Natural killer cell (primary cell): ENCODE measurements at regions of chr17 and their contacts with region 1.

Region 1: DNA sequence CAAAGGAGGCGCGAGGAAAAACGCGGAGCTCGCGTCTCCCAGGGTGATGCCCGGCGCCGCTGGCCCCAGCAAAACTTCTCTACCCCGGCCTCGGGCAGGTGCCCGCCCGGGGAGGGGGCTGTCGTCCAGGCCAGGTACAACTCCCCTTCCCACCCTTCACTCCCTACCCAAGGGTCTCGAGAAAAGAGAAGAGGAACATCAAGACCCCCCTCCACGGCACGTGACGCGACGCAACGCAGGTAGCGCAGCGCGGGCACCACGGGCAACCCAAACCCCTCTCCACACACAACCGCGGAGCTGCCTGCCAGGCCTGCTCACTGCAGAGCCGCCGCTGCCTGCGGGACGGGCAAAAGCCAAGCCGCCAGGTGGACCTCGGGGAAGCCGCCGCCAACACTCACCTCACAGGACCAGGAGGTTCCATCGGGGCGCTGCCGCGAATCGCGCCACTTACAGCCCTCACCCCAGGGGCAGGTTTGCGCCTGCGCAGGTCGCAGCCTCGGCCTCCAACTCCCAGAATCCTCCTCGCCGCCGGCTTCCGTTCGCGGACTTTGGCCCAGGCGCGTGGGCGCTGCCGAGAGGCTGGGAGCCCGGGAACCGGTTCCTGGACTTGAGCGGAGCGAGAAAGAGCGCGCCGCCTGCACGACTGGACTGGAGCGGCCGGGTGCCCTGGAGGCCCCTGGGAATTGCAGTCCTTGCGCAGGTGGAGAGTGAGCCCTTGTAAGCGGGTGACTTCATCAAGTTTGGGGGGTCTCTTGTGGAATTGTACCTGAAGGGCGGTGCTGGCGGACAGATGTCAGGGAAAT is at the start of gene ZNF232:
- DNase-seq: peak; percentile 82 to 95
- ATAC-seq: peak; percentile 93 to 94 (median 93)
- H3K4me3 ChIP-seq: peak within 1 kb of the TSS; percentile 96
- H3K4me3 Mint-ChIP-seq: peak within 1 kb of the TSS; percentile 86
- H3K27ac ChIP-seq: peak within 1 kb of the TSS; percentile 56
- H3K27ac Mint-ChIP-seq: peak within 1 kb of the TSS; percentile 73 to 84
- H3K4me1 ChIP-seq: peaks cover 18% of the 10 kb centered on the region
- H3K4me1 Mint-ChIP-seq: peaks cover 19% of the 10 kb centered on the region in 2 donors
- H3K27me3 ChIP-seq: peaks cover 10% of the 10 kb centered on the region
- H3K27me3 Mint-ChIP-seq: peaks cover 4 to 18% of the 10 kb centered on the region in 2 donors
- CTCF ChIP-seq: no peak
- total RNA-seq, gene ZNF232: 2.8 to 6.5 (median 5.6) TPM

Region 2: GRCh38 chr17:5097101-5097834 is 14.3 kb before region 1 on chr17:
- intact Hi-C with region 1: loop called (anchors 1 kb)
- DNase-seq: peak; percentile 46 to 65
- ATAC-seq: peak; percentile 81 to 97 (median 97)
- H3K4me3 ChIP-seq: peak overlapping the region; percentile 56
- H3K4me3 Mint-ChIP-seq: peak overlapping the region; percentile 90
- H3K27ac ChIP-seq: no peak overlapping the region
- H3K27ac Mint-ChIP-seq: peak overlapping the region; percentile 43 to 76
- H3K4me1 ChIP-seq: peaks cover 9% of the 10 kb centered on the region
- H3K4me1 Mint-ChIP-seq: peaks cover 12 to 13% of the 10 kb centered on the region in 2 donors
- H3K27me3 ChIP-seq: peaks cover 7% of the 10 kb centered on the region
- H3K27me3 Mint-ChIP-seq: peaks cover 9 to 19% of the 10 kb centered on the region in 2 donors
- CTCF ChIP-seq: no peak

Region 3: DNA sequence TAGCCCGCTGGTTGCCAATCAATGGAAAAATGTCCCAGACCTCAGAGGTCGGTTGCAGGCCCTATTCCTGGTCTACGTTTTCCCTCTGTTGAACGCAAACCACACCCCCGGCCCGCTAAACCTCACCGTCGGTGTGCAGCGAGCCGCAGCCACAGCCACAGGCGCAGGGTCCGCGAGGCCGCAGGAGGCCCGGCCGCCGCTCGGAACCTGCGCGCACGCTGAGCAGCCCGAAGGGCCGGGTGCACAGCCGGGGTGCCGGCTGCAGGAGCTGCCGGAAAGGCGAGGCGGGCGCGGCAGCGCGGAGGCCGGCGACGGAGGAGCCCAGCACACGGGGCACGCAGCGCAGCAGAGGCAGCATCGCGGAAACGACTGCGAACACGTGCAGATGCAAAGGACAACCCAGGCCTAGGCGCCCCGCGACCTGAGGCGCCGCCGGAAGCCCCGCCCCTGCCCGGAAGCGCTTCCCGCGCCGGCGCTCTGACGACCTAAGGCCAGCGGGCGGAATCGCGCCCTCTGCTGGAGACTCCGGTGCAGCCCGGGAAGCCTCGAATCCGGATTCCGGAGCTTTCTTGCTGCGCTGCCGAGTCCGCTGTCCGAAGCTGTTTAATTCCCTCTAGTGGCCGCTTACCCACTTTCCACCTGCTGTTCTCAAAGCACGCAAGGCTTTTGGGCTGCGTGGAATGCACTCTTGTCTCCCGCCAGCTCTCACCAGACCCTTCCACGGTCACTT is 327.3 kb after region 1 on chr17 and contains the start of gene C1QBP:
- intact Hi-C with region 1: loop called (anchors 10 kb)
- DNase-seq: peak; percentile 95 to 97
- ATAC-seq: peak; percentile 93 to 98 (median 95)
- H3K4me3 ChIP-seq: peak within 1 kb of the TSS; percentile 51
- H3K4me3 Mint-ChIP-seq: peak within 1 kb of the TSS; percentile 81
- H3K27ac ChIP-seq: peak within 1 kb of the TSS; percentile 70
- H3K27ac Mint-ChIP-seq: peak within 1 kb of the TSS; percentile 81 to 92
- H3K4me1 ChIP-seq: peaks cover 13% of the 10 kb centered on the region
- H3K4me1 Mint-ChIP-seq: peaks cover 19 to 27% of the 10 kb centered on the region in 2 donors
- H3K27me3 ChIP-seq: no peaks in the 10 kb centered on the region
- H3K27me3 Mint-ChIP-seq: no peaks in the 10 kb centered on the region
- CTCF ChIP-seq: peak; percentile 97
- total RNA-seq, gene C1QBP: 38.1 to 40.8 (median 40.0) TPM